IMR-90 (cell line): ENCODE measurements at regions of chr2 and their contacts with region 1.

Region 1: DNA sequence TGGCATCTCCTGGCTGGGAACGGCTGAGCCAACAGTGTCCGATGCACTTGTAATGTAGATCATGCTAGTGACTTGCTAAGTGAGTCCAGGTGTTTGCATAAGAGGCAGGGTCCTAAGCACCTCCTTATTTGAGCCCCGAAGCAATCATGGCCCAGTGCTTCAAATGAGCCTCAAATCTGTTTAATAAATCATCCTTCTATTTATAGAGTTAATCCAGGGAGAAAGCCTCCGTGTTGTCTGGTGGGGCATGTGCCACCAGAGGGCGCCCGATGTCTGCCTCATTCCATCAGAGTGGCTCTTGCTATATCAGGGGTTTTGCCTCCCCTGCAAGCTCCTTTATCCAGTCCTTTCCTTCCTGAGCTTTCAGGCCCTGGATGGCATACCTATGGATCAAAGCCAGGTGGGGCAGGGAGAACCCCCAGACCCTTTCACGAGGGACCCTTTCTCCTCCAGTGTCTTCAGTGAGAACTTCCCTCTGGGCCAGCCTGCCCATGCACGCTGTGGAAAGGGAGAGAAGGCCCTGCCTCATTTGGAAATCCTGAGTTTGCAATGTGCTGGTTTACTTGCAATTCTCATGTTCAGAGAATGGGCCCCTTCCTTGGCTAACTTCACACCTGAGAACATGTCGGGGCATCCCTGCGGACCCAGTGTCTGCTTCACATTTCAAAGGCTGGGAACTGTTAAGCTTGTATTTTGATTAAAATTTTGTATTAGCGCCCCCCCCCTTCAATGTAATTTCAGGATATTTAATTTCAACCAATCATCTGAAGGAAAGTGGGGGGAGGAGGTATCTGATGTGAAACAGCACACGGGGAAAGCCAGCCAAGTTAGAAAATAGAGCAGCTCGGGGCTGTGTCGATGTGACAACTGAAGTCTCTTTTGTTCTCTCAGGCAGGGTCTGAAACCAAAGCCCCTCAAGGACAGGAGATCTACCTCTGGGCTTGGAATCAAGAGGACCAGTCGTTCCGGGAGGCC is 39.7 kb downstream of the RDH14 start:
- DNase-seq: peak; percentile 78
- ATAC-seq: peak; percentile 58
- H3K4me3 ChIP-seq: no peak overlapping the region
- H3K27ac ChIP-seq: no peak overlapping the region
- H3K4me1 ChIP-seq: peaks cover 21% of the 10 kb centered on the region
- H3K27me3 ChIP-seq: no peaks in the 10 kb centered on the region
- CTCF ChIP-seq: peak; percentile 95
- POLR2A ChIP-seq: peak; percentile 39; the same call in 1 of the 2 replicates
- RAD21 ChIP-seq: peak; percentile 97

Region 2: DNA sequence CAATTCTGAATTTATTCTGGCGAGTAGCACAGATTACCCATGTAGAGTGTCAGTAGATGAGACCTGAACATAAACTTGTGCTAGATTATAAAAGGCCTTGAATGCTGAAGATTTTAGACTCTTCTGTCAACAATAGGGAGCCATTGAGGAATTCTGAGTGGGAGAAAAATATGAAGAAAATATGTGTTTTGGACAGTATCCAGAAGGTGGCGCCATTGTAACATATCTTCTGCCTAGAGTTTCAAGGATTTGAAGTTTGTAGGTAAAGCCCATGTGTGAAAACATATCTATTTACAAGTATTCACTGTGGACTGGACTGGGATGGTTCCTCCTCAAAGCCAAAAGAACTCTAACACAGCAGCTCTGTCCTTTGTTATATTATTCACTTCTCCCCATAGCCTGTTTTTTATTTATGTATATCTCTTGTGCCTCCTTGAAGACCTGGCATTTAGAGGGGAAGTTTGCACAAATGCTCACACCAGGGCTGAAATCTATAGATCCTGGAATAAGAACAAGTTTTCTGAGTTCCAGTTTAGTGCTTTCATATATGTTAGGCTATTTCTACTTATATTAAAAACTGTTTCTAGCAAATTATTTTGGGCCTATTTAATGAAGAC is 85.2 kb before region 1 on chr2:
- CTCF ChIA-PET with region 1: interaction called, 5 read pairs
- POLR2A ChIA-PET with region 1: no interaction called
- dilution Hi-C with region 1: no loop called
- in situ Hi-C with region 1: no loop called
- intact Hi-C with region 1: loop called (anchors 1 kb)
- DNase-seq: peak; percentile 79
- ATAC-seq: peak; percentile 57
- H3K4me3 ChIP-seq: no peak overlapping the region
- H3K27ac ChIP-seq: no peak overlapping the region
- H3K4me1 ChIP-seq: peaks cover 12% of the 10 kb centered on the region
- H3K27me3 ChIP-seq: no peaks in the 10 kb centered on the region
- CTCF ChIP-seq: peak; percentile 75
- POLR2A ChIP-seq: 0 out of 2 replicates have a peak, but pooled peaks have one; percentile 28
- RAD21 ChIP-seq: peak; percentile 84

Region 3: GRCh38 chr2:18484625-18485024 is 36.1 kb before region 1 on chr2:
- CTCF ChIA-PET with region 1: no interaction called
- POLR2A ChIA-PET with region 1: no interaction called
- dilution Hi-C with region 1: no loop called
- in situ Hi-C with region 1: no loop called
- intact Hi-C with region 1: no loop called
- DNase-seq: no peak
- ATAC-seq: no peak
- H3K4me3 ChIP-seq: no peak overlapping the region
- H3K27ac ChIP-seq: no peak overlapping the region
- H3K4me1 ChIP-seq: no peaks in the 10 kb centered on the region; the same call in 1 of the 2 replicates
- H3K27me3 ChIP-seq: no peaks in the 10 kb centered on the region
- CTCF ChIP-seq: no peak
- POLR2A ChIP-seq: no peak
- RAD21 ChIP-seq: no peak

Region 4: GRCh38 chr2:18552351-18553077 is 31.8 kb after region 1 on chr2:
- CTCF ChIA-PET with region 1: no interaction called
- POLR2A ChIA-PET with region 1: no interaction called
- dilution Hi-C with region 1: no loop called
- in situ Hi-C with region 1: no loop called
- intact Hi-C with region 1: no loop called
- DNase-seq: no peak
- ATAC-seq: no peak
- H3K4me3 ChIP-seq: no peak overlapping the region
- H3K27ac ChIP-seq: no peak overlapping the region
- H3K4me1 ChIP-seq: no peaks in the 10 kb centered on the region
- H3K27me3 ChIP-seq: no peaks in the 10 kb centered on the region
- CTCF ChIP-seq: no peak
- POLR2A ChIP-seq: no peak
- RAD21 ChIP-seq: no peak

Region 5: DNA sequence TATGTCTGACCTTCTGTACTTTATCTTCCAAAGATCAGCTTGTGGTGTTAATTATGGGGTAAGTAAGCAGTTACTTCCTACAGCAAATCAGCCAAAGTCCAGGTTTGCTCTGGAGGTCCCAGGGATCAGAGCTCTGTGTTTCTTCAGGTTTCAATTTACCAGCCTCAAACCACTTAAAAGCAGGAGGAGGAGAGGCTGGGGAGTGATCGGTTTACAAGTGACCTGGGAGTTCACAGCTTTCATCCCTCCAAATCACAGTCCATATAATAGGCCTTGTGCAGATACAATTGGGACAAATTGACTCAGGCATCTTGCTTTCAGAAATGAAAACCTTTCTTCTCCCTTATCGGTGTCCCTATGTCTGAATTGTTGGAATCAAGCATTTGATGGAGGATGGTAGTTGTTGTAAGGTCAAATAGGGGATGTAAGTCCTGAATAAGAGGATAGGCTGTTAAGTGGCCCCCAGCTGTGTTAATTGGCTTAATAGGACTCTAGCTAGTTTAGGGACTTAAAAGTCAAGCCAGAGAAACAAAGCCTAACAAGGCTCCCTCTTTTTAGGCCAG is 256.6 kb after region 1 on chr2:
- CTCF ChIA-PET with region 1: no interaction called
- POLR2A ChIA-PET with region 1: no interaction called
- dilution Hi-C with region 1: no loop called
- in situ Hi-C with region 1: no loop called
- intact Hi-C with region 1: no loop called
- DNase-seq: no peak
- ATAC-seq: no peak
- H3K4me3 ChIP-seq: no peak overlapping the region
- H3K27ac ChIP-seq: no peak overlapping the region
- H3K4me1 ChIP-seq: peaks cover 6% of the 10 kb centered on the region; the same call in 1 of the 2 replicates
- H3K27me3 ChIP-seq: no peaks in the 10 kb centered on the region
- CTCF ChIP-seq: no peak
- POLR2A ChIP-seq: no peak
- RAD21 ChIP-seq: no peak

Region 6: DNA sequence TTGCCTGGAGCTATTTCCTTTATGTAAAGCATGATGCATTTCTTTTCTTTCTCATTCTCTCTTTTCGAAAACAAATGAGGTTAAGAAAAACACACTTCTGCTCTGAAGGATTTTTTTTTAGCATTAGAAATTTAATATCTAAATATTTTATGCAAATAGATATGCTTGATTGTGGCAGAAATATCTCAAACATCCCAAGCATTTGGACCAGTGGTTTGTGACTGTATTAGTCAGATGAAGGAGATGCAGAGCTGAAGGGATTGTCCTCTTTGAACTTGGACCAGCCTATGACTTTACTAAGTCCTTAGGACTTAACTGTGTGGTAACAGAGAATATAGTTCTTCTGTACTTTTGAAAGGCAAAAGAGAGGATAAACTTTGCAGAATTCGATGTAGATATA is 404.6 kb after region 1 on chr2:
- CTCF ChIA-PET with region 1: no interaction called
- POLR2A ChIA-PET with region 1: no interaction called
- dilution Hi-C with region 1: no loop called
- in situ Hi-C with region 1: no loop called
- intact Hi-C with region 1: loop called (anchors 10 kb)
- DNase-seq: peak; percentile 94
- ATAC-seq: peak; percentile 94
- H3K4me3 ChIP-seq: no peak overlapping the region
- H3K27ac ChIP-seq: peak overlapping the region; percentile 47; the same call in 1 of the 2 replicates
- H3K4me1 ChIP-seq: peaks cover 16% of the 10 kb centered on the region
- H3K27me3 ChIP-seq: no peaks in the 10 kb centered on the region
- CTCF ChIP-seq: no peak
- POLR2A ChIP-seq: no peak
- RAD21 ChIP-seq: 0 out of 2 replicates have a peak, but pooled peaks have one; percentile 11

Region 7: GRCh38 chr2:19140596-19141219 is 620.0 kb after region 1 on chr2:
- CTCF ChIA-PET with region 1: no interaction called
- POLR2A ChIA-PET with region 1: no interaction called
- dilution Hi-C with region 1: no loop called
- in situ Hi-C with region 1: no loop called
- intact Hi-C with region 1: loop called (anchors 10 kb)
- DNase-seq: peak; percentile 95
- ATAC-seq: peak; percentile 86
- H3K4me3 ChIP-seq: no peak overlapping the region
- H3K27ac ChIP-seq: peak overlapping the region; percentile 80
- H3K4me1 ChIP-seq: peaks cover 19% of the 10 kb centered on the region
- H3K27me3 ChIP-seq: no peaks in the 10 kb centered on the region
- CTCF ChIP-seq: no peak
- POLR2A ChIP-seq: no peak
- RAD21 ChIP-seq: no peak

Region 8: GRCh38 chr2:19863303-19864041 is 1342.7 kb after region 1 on chr2:
- CTCF ChIA-PET with region 1: interaction called, 3 read pairs
- POLR2A ChIA-PET with region 1: no interaction called
- dilution Hi-C with region 1: no loop called
- in situ Hi-C with region 1: no loop called
- intact Hi-C with region 1: loop called (anchors 5 kb)
- DNase-seq: peak; percentile 45
- ATAC-seq: peak; percentile 76
- H3K4me3 ChIP-seq: no peak overlapping the region
- H3K27ac ChIP-seq: no peak overlapping the region
- H3K4me1 ChIP-seq: peaks cover 14% of the 10 kb centered on the region
- H3K27me3 ChIP-seq: peaks cover 3% of the 10 kb centered on the region
- CTCF ChIP-seq: peak; percentile 83
- POLR2A ChIP-seq: no peak
- RAD21 ChIP-seq: peak; percentile 98